Stomach (tissue), 19 donors: ENCODE measurements at regions of chr19 and their contacts with region 1.

Region 1: GRCh38 chr19:10390652-10391286 is 10.4 kb upstream of the TYK2 start:
- DNase-seq: peak; percentile 79 to 89
- H3K4me3 ChIP-seq: no peak overlapping the region
- H3K27ac ChIP-seq: no peak overlapping the region
- H3K4me1 ChIP-seq: peaks cover 5 to 9% (median 8%) of the 10 kb centered on the region in 4 donors
- H3K27me3 ChIP-seq: peaks cover 0 to 6% (median 0%) of the 10 kb centered on the region in 3 donors
- CTCF ChIP-seq: peak in 5 of 7 experiments; percentile 77 to 86 (median 80)
- EP300 ChIP-seq: no peak
- POLR2A ChIP-seq: no peak

Region 2: DNA sequence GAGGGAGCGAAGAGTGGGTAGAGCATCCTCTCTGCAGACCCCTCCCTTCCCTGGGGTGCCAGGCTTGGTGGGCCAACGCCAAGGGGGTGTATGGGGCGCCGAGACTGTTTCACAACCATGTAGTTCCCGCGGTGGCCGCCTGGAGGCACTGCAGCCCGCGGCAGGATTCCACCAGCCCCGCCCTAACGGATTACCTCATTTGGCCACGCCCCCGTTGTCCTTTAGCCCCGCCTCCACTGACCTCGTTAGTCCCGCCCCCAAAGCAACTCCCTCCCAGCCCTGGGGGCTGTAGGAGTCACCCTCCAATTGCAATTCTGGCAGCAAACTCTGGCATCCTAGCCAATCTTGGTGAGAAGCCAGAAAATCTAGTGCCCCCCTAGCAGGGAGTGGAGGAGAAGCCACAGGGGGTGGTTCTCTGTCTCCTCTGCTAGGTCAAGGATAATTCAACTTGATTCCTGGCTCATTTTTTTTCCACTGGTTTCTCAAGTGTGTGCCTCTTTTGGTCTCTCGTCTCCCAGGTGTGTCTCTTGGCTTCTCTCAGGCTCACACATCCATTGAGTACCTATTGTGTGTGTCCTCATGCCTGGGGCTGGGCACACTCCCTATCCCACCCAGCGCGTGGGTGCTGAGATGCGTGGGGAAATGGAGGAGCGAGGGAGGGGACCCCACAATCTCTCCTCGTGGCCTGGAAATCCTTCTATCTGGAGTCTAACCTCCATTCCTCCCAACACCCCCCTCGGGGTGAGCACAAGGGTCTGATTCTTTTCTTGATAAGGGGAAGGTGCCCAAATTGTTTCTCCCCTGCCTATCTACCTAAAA is 456.4 kb before region 1 on chr19:
- intact Hi-C with region 1: loop called (anchors 10 kb)
- DNase-seq: peak; percentile 68 to 83
- H3K4me3 ChIP-seq: no peak overlapping the region
- H3K27ac ChIP-seq: no peak overlapping the region
- H3K4me1 ChIP-seq: peaks cover 13 to 40% (median 29%) of the 10 kb centered on the region in 4 donors
- H3K27me3 ChIP-seq: peaks cover 11 to 74% (median 53%) of the 10 kb centered on the region in 3 donors
- CTCF ChIP-seq: peak in 5 of 7 experiments; percentile 55 to 74 (median 67)
- EP300 ChIP-seq: no peak
- POLR2A ChIP-seq: no peak

Region 3: DNA sequence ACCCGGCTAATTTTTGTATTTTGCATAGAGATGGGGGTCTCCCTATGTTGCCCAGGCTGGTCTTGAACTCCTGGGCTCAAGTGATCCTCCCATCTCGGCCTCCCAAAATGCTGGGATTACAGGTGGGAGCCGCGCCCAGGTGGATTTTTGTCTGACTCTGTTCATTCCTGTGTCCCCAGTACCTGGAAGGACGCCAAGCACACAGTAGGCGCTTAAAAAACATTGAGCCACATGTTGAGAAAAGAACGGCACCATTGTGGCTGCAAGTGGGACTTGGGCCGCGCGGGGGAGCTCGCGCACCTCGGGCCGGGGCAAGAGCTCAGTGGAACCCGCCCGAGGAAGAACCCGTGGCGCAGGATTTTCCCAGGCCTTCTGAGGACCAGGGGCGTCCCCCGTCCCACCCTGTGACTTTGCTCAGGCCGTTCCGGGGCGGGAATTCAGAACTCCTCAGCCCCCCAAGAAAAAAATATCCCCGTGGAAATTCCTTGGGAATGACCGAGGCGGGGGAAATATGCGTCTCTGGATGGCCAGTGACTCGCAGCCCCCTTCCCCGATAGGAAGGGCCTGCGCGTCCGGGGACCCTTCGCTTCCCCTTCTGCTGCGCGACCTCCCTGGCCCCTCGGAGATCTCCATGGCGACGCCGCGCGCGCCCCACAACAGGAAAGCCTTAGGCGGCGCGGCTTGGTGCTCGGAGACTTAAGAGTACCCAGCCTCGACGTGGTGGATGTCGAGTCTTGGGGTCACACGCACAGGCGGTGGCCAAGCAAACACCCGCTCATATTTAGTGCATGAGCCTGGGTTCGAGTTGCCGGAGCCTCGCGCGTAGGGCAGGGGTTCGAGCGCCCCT is 121.2 kb before region 1 on chr19:
- intact Hi-C with region 1: loop called (anchors 5 kb)
- DNase-seq: peak; percentile 88 to 93
- H3K4me3 ChIP-seq: peak overlapping the region; percentile 39 to 68 (median 44)
- H3K27ac ChIP-seq: peak overlapping the region; percentile 67 to 92 (median 85)
- H3K4me1 ChIP-seq: peaks cover 16 to 38% (median 27%) of the 10 kb centered on the region in 4 donors
- H3K27me3 ChIP-seq: peaks cover 0 to 35% (median 0%) of the 10 kb centered on the region in 3 donors
- CTCF ChIP-seq: peak in 5 of 7 experiments; percentile 86 to 92 (median 90)
- EP300 ChIP-seq: no peak
- POLR2A ChIP-seq: no peak

Region 4: DNA sequence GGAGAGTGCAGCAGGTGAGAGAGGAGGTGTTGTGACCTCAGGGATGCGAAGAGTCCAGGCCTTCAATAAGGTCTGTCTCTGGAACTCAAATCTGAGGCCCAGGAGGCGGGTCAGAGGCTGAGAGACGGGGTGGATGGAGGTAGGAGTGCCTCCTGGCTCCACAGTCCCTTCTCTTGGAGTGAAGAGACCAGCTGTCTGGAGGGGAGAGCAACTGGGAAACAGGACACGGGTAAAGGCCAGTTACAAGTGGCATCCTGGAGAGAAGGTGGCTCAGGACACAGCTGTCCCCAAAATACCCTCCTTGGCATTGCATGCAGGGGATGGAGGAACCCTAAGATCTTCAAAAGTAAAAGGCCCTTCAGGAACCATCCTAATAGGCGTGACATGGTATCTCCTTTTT is 48.8 kb after region 1 on chr19:
- intact Hi-C with region 1: no loop called
- DNase-seq: no peak
- H3K4me3 ChIP-seq: no peak overlapping the region
- H3K27ac ChIP-seq: no peak overlapping the region
- H3K4me1 ChIP-seq: no peaks in the 10 kb centered on the region
- H3K27me3 ChIP-seq: no peaks in the 10 kb centered on the region
- CTCF ChIP-seq: no peak
- EP300 ChIP-seq: no peak
- POLR2A ChIP-seq: no peak

Region 5: DNA sequence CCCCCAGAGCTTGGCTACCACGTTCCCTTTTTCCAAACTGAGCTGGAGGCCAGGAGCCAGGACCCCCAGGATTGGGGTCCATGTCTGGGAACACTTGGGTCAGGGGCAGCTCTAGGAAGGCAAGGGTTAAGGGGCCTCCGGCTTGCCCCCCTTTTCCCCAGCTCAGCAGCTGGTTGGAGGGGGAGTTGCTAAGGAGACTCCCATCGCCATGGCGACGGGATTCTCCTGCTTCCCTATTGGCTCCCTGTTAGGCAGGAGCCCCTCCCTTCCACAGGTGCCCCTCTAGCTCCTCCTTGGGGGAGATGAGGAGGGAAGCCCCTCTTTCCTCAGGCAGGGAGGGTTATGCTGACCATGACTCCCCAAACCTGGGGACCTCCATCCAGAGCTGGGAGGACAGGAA is 63.5 kb after region 1 on chr19:
- intact Hi-C with region 1: no loop called
- DNase-seq: peak in 1 of 2 donors; percentile 67
- H3K4me3 ChIP-seq: no peak overlapping the region
- H3K27ac ChIP-seq: no peak overlapping the region
- H3K4me1 ChIP-seq: no peaks in the 10 kb centered on the region
- H3K27me3 ChIP-seq: no peaks in the 10 kb centered on the region
- CTCF ChIP-seq: no peak
- EP300 ChIP-seq: no peak
- POLR2A ChIP-seq: no peak